Activated CD4-positive, alpha-beta T cell treated with anti-CD3 and anti-CD28 coated beads for 36 hours (primary cell): ENCODE measurements at regions of chr6 and their contacts with region 1.

Region 1: GRCh38 chr6:167047554-167047953 is 48.4 kb downstream of the CEP43 start:
- DNase-seq: peak; percentile 82
- ATAC-seq: peak; percentile 87
- H3K4me3 Mint-ChIP-seq: peak overlapping the region; percentile 34
- H3K27ac Mint-ChIP-seq: peak overlapping the region; percentile 76
- H3K4me1 Mint-ChIP-seq: peaks cover 41% of the 10 kb centered on the region
- H3K27me3 Mint-ChIP-seq: no peaks in the 10 kb centered on the region

Region 2: GRCh38 chr6:166956444-166957086 is 91.0 kb before region 1 on chr6 and contains the start of gene RNASET2:
- CTCF ChIA-PET with region 1: no interaction called
- POLR2A ChIA-PET with region 1: interaction called, 3 read pairs
- intact Hi-C with region 1: loop called in 1 of 2 experiments (anchors 2 kb)
- DNase-seq: peak; percentile 100
- ATAC-seq: peak; percentile 80
- H3K4me3 Mint-ChIP-seq: peak within 1 kb of the TSS; percentile 94
- H3K27ac Mint-ChIP-seq: peak within 1 kb of the TSS; percentile 97
- H3K4me1 Mint-ChIP-seq: peaks cover 69% of the 10 kb centered on the region
- H3K27me3 Mint-ChIP-seq: no peaks in the 10 kb centered on the region
- total RNA-seq, gene RNASET2: 68.7 to 85.2 TPM

Region 3: GRCh38 chr6:167079853-167080297 is 32.3 kb after region 1 on chr6:
- CTCF ChIA-PET with region 1: no interaction called
- POLR2A ChIA-PET with region 1: interaction called, 3 read pairs
- intact Hi-C with region 1: loop called (anchors 2 kb)
- DNase-seq: peak; percentile 83
- ATAC-seq: peak; percentile 94
- H3K4me3 Mint-ChIP-seq: no peak overlapping the region
- H3K27ac Mint-ChIP-seq: peak overlapping the region; percentile 53
- H3K4me1 Mint-ChIP-seq: peaks cover 22% of the 10 kb centered on the region
- H3K27me3 Mint-ChIP-seq: no peaks in the 10 kb centered on the region

Region 4: GRCh38 chr6:167113935-167114910 is 66.7 kb after region 1 on chr6:
- CTCF ChIA-PET with region 1: no interaction called
- POLR2A ChIA-PET with region 1: interaction called, 7 read pairs
- intact Hi-C with region 1: loop called (anchors 2 kb)
- DNase-seq: peak; percentile 83
- ATAC-seq: peak; percentile 68
- H3K4me3 Mint-ChIP-seq: peak overlapping the region; percentile 73
- H3K27ac Mint-ChIP-seq: peak overlapping the region; percentile 84
- H3K4me1 Mint-ChIP-seq: peaks cover 63% of the 10 kb centered on the region
- H3K27me3 Mint-ChIP-seq: no peaks in the 10 kb centered on the region

Region 5: GRCh38 chr6:167150941-167151549 is 103.5 kb after region 1 on chr6:
- CTCF ChIA-PET with region 1: interaction called, 3 read pairs
- POLR2A ChIA-PET with region 1: no interaction called
- intact Hi-C with region 1: loop called in 1 of 2 experiments (anchors 1 kb)
- DNase-seq: peak; percentile 47
- ATAC-seq: peak; percentile 82
- H3K4me3 Mint-ChIP-seq: no peak overlapping the region
- H3K27ac Mint-ChIP-seq: no peak overlapping the region
- H3K4me1 Mint-ChIP-seq: peaks cover 33% of the 10 kb centered on the region
- H3K27me3 Mint-ChIP-seq: peaks cover 8% of the 10 kb centered on the region

Region 6: DNA sequence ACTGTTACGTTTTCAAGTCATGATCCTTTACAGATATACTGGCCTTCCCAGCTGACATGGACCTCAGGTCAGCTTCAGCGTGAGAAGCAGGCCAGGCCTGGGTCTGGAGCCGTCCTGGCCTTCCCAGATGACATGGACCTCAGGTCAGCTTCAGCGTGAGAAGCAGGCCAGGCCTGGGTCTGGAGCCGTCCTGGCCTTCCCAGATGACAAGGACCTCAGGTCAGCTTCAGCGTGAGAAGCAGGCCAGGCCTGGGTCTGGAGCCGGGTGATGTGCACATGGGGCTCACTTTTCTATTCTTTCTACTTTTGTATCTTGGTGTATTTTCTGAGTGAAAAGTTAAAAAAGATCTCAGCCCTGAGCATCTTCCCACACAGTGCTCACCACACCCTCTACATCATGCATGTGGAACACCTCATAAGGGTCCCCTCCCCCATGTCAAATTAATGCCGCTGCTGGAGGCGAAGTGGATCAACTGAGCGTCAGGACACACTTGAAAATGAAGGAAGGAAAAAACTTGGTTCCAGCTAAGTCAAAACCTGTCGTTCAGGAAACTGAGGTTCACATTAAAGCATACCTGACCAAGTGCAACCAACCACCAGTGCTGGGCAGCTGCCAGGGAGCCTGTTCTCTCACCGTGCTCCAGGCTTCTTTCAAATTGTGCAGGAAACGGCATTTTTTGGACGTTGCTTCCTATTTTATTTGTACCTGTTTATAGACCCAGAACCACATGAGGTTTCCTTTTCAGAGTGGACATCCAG is 982.1 kb after region 1 on chr6:
- CTCF ChIA-PET with region 1: no interaction called
- POLR2A ChIA-PET with region 1: no interaction called
- intact Hi-C with region 1: no loop called
- DNase-seq: no peak
- ATAC-seq: no peak
- H3K4me3 Mint-ChIP-seq: no peak overlapping the region
- H3K27ac Mint-ChIP-seq: no peak overlapping the region
- H3K4me1 Mint-ChIP-seq: no peaks in the 10 kb centered on the region
- H3K27me3 Mint-ChIP-seq: peaks cover 10% of the 10 kb centered on the region